H1 (cell line): ENCODE measurements at regions of chr3 and their contacts with region 1.

Region 1: DNA sequence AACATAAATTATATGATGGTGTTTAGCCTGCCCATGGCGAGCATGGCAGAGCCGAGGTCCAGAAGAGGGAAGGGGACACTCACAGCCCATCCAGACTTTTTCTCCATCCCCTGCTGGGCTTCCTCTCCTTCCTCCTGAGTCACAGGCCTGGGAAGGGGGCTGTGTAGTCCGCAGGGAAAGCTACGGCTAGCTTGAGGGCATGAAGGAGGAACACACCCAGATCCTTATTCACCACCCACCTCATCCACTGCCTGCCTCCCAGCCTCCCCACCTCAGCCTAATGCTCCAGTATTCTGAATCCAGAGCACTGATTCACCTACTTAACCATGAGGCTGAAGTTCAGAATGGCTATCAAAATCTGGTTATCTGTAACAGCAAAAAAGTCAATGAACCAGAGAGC is 97.8 kb downstream of the OXNAD1 start:
- DNase-seq: no peak
- H3K4me3 ChIP-seq: no peak overlapping the region
- H3K27ac ChIP-seq: no peak overlapping the region
- H3K4me1 ChIP-seq: no peaks in the 10 kb centered on the region; a peak in 1 of 7 replicates
- H3K27me3 ChIP-seq: no peaks in the 10 kb centered on the region
- CTCF ChIP-seq: no peak
- EP300 ChIP-seq: no peak
- POLR2A ChIP-seq: no peak
- RAD21 ChIP-seq: no peak

Region 2: DNA sequence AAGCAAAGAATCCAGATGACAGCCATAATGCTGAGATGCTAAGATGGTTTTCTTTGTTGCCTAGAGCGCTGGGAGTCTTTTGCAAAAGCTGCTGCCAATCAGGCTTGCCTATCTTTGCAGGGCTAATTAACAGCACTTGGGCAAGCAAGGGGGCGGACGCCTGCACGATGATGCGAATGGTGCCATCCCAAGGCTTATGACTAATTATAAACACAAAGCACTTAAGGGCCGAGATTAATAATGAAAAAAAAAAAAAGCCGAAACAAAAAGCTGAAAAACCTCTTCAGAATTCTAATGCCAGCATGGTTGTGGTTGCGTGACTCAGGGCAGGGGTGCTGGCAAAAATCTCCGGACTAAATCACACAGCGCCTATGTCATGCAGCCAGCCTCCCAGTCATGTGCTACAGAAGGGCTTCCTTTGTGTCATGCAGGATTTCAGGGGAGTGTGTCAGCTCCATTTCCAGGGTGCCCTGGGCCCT is 380.1 kb before region 1 on chr3:
- CTCF ChIA-PET with region 1: no interaction called
- POLR2A ChIA-PET with region 1: no interaction called
- DNase-seq: no peak
- H3K4me3 ChIP-seq: no peak overlapping the region
- H3K27ac ChIP-seq: no peak overlapping the region
- H3K4me1 ChIP-seq: no peaks in the 10 kb centered on the region
- H3K27me3 ChIP-seq: no peaks in the 10 kb centered on the region
- CTCF ChIP-seq: no peak
- EP300 ChIP-seq: no peak
- POLR2A ChIP-seq: no peak
- RAD21 ChIP-seq: no peak

Region 3: GRCh38 chr3:16511681-16512434 is 149.1 kb after region 1 on chr3:
- CTCF ChIA-PET with region 1: interaction called, 26 read pairs
- POLR2A ChIA-PET with region 1: no interaction called
- DNase-seq: no peak
- H3K4me3 ChIP-seq: peak overlapping the region in 2 of 4 experiments; percentile 60 to 84; a peak in 4 of 8 replicates
- H3K27ac ChIP-seq: no peak overlapping the region
- H3K4me1 ChIP-seq: peaks cover 4 to 23% (median 7%) of the 10 kb centered on the region in 4 experiments
- H3K27me3 ChIP-seq: peaks cover 15 to 33% (median 31%) of the 10 kb centered on the region in 4 experiments
- CTCF ChIP-seq: peak in 1 of 3 experiments; percentile 8; a peak in 1 of 4 replicates
- EP300 ChIP-seq: no peak
- POLR2A ChIP-seq: no peak
- RAD21 ChIP-seq: peak; percentile 34 to 57